Activated CD4-positive, alpha-beta T cell treated with anti-CD3 and anti-CD28 coated beads for 36 hours (primary cell): ENCODE measurements at regions of chr3 and their contacts with region 1.

Region 1: GRCh38 chr3:5194341-5195159 is 7.0 kb downstream of the EDEM1 start:
- DNase-seq: peak; percentile 62
- ATAC-seq: peak; percentile 34
- H3K4me3 Mint-ChIP-seq: peak overlapping the region; percentile 68
- H3K27ac Mint-ChIP-seq: peak overlapping the region; percentile 98
- H3K4me1 Mint-ChIP-seq: peaks cover 86% of the 10 kb centered on the region
- H3K27me3 Mint-ChIP-seq: no peaks in the 10 kb centered on the region

Region 2: GRCh38 chr3:4426601-4427344 is 767.8 kb before region 1 on chr3:
- CTCF ChIA-PET with region 1: no interaction called
- POLR2A ChIA-PET with region 1: no interaction called
- intact Hi-C with region 1: loop called in 1 of 2 experiments (anchors 10 kb)
- DNase-seq: no peak
- ATAC-seq: no peak
- H3K4me3 Mint-ChIP-seq: no peak overlapping the region
- H3K27ac Mint-ChIP-seq: no peak overlapping the region
- H3K4me1 Mint-ChIP-seq: peaks cover 27% of the 10 kb centered on the region
- H3K27me3 Mint-ChIP-seq: no peaks in the 10 kb centered on the region

Region 3: DNA sequence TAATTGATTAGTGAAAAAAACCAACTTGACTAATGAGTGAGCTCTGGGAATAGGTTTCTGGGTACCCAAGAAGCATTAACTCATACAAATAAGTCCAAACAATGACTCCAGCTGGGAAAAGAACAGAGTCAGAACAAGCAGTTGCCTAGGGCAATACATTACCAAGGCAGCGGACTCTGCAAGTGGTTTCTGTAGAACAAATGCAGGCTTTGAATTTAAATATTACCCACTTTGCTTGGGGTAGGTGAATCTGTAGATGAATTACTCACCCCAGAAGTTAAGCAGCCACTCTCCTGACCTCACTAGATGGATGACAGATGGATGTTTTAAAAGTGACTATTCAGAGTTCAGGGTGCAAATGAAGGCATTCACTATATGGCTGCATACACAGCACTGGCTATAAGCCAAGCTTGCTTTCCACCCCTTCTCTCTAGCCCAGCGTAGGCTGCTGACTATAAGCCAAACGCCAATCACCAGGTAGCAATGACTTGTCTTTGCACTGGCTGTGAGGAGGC is 288.4 kb before region 1 on chr3:
- CTCF ChIA-PET with region 1: no interaction called
- POLR2A ChIA-PET with region 1: no interaction called
- intact Hi-C with region 1: loop called (anchors 5 kb)
- DNase-seq: peak; percentile 54
- ATAC-seq: peak; percentile 75
- H3K4me3 Mint-ChIP-seq: no peak overlapping the region
- H3K27ac Mint-ChIP-seq: peak overlapping the region; percentile 53
- H3K4me1 Mint-ChIP-seq: peaks cover 75% of the 10 kb centered on the region
- H3K27me3 Mint-ChIP-seq: no peaks in the 10 kb centered on the region

Region 4: GRCh38 chr3:5205165-5205941 is 10.8 kb after region 1 on chr3:
- CTCF ChIA-PET with region 1: interaction called, 3 read pairs
- POLR2A ChIA-PET with region 1: interaction called, 6 read pairs
- intact Hi-C with region 1: loop called in 1 of 2 experiments (anchors 1 kb)
- DNase-seq: peak; percentile 72
- ATAC-seq: peak; percentile 90
- H3K4me3 Mint-ChIP-seq: no peak overlapping the region
- H3K27ac Mint-ChIP-seq: peak overlapping the region; percentile 87
- H3K4me1 Mint-ChIP-seq: peaks cover 41% of the 10 kb centered on the region
- H3K27me3 Mint-ChIP-seq: no peaks in the 10 kb centered on the region

Region 5: GRCh38 chr3:6315906-6316305 is 1121.4 kb after region 1 on chr3:
- CTCF ChIA-PET with region 1: no interaction called
- POLR2A ChIA-PET with region 1: no interaction called
- intact Hi-C with region 1: no loop called
- DNase-seq: no peak
- ATAC-seq: no peak
- H3K4me3 Mint-ChIP-seq: no peak overlapping the region
- H3K27ac Mint-ChIP-seq: no peak overlapping the region
- H3K4me1 Mint-ChIP-seq: no peaks in the 10 kb centered on the region
- H3K27me3 Mint-ChIP-seq: no peaks in the 10 kb centered on the region